Motor neuron (in vitro differentiated cells): ENCODE measurements at regions of chr1 and their contacts with region 1.

Region 1: GRCh38 chr1:169711469-169712281 is at the start of gene SELL:
- ATAC-seq: peak in 4 of 8 experiments; percentile 69 to 99 (median 99)
- H3K4me3 ChIP-seq: no peak within 1 kb of the TSS
- H3K27ac ChIP-seq: no peak within 1 kb of the TSS
- H3K4me1 ChIP-seq: no peaks in the 10 kb centered on the region
- total RNA-seq, gene SELL: 0.41 to 28.3 (median 0.67) TPM in 4 of 8 experiments, not detected in the others

Region 2: GRCh38 chr1:169601093-169601881 is 110.4 kb before region 1 on chr1:
- in situ Hi-C with region 1: loop called in 2 of 9 experiments (anchors 10 to 25 kb)
- ATAC-seq: peak in 3 of 8 experiments; percentile 43 to 57 (median 54)
- H3K4me3 ChIP-seq: no peak overlapping the region
- H3K27ac ChIP-seq: no peak overlapping the region
- H3K4me1 ChIP-seq: no peaks in the 10 kb centered on the region